Lower leg skin (tissue), 4 donors: ENCODE measurements at regions of chr18 and their contacts with region 1.

Region 1: DNA sequence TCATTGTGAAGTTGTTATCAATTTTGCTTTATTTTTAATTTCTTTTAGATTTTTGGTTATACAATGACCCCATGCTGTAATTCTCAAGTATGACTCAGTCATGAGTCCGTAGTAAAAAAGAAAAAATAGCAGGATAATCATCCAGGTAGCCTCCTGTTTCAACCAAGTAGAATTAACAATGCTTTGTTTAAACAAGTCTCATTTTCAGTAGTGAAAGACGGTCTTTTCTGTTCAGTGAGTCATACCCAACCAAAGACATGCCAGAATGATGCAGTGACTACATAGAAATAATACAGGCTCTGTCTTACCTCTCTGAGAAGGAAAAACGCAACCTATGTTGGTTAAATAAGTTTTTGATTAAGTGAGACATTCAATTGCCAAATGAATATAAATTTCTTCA is 67.8 kb upstream of the DSC1 start:
- DNase-seq: no peak
- H3K4me3 ChIP-seq: no peak overlapping the region
- CTCF ChIP-seq: no peak
- POLR2A ChIP-seq: no peak

Region 2: DNA sequence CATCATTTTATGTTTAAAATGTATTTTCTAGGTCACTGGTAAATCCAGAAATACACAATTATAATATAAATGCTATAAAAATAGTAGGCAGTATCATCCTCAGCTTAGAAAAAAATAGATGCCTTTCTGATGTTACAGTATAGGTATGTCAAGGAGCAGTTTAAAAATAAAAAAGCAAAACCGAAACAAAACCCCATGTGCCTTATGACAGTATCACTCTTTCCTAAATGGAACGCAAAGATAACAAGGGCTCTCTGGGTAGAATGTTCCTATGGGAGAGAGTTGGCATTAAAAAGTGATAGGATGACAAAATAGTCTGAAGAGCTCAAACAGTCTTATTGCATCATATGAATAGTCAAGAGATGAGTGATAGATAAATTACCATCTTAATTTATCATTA is 360.0 kb before region 1 on chr18:
- intact Hi-C with region 1: loop called (anchors 5 kb)
- DNase-seq: no peak
- H3K4me3 ChIP-seq: no peak overlapping the region
- CTCF ChIP-seq: no peak
- POLR2A ChIP-seq: no peak